ENCODE measurements at regions of chr19 and their contacts with region 1.

Region 1: DNA sequence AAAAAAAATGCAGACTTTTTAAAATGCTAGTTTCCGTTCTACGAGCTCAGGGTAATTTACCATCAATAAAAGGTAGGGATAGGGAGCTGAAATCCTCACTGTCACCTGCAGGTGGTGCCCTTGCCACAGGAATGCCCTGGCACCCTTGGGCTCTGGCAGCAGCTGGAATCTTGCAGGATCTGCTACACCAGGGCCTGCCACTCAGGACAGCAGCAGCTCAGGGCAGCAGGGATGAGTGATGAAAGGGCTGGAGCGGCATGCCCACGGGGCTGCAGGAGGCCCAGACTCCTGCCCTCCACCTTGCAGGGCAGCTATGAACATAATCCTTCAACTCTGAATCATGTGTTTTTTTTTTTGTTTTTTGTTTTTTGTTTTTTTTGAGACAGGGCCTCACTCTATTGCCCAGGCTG is 54.0 kb downstream of the GNG7 start:
- DNase-seq: peak; percentile 83
- ATAC-seq: peak; percentile 95
- H3K4me3 ChIP-seq: no peak overlapping the region
- H3K27ac ChIP-seq: no peak overlapping the region
- H3K4me1 ChIP-seq: no peaks in the 10 kb centered on the region
- H3K27me3 ChIP-seq: no peaks in the 10 kb centered on the region
- CTCF ChIP-seq: peak; percentile 81

Region 2: DNA sequence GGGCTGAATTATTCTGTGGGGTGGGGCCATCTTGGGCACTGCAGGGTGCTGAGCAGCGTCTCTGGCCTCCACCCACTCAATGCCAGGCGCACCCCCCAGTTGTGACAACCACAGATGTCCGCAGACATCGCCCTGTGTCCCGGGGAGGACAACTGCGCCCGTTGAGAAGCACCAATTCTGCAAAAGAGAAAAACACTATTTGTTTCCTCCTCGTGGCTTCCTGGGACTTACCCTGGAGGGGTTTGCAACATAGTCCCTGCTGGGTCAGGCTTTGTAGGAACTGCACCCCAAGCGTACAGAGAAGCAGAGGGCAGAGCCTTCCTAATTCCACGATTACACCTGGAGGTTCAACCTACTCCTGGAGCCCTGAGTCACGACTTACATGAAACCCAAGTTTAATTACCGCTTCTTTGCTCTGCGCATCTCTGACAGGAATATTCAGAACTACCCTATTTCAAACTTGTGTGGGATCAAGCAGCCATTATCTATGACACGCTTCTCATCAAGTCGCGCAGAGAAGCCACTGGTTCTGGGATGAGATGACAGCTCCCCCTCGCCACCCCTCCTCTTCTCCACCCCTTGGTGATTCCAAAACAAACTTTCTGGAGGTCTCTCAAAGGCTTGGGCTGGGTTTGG is 102.4 kb after region 1 on chr19:
- CTCF ChIA-PET with region 1: interaction called, 18 read pairs
- POLR2A ChIA-PET with region 1: no interaction called
- intact Hi-C with region 1: loop called (anchors 1 kb)
- DNase-seq: no peak
- ATAC-seq: no peak
- H3K4me3 ChIP-seq: no peak overlapping the region
- H3K27ac ChIP-seq: no peak overlapping the region
- H3K4me1 ChIP-seq: no peaks in the 10 kb centered on the region
- H3K27me3 ChIP-seq: no peaks in the 10 kb centered on the region
- CTCF ChIP-seq: no peak